ENCODE measurements at regions of chr7 and their contacts with region 1.

Region 1: GRCh38 chr7:44606450-44607254 is at the start of gene OGDH:
- DNase-seq: peak; percentile 100
- H3K4me3 Mint-ChIP-seq: peak within 1 kb of the TSS; percentile 98
- H3K27ac Mint-ChIP-seq: peak within 1 kb of the TSS; percentile 98
- H3K4me1 Mint-ChIP-seq: peaks cover 48% of the 10 kb centered on the region
- H3K27me3 Mint-ChIP-seq: peaks cover 6% of the 10 kb centered on the region
- total RNA-seq, gene OGDH: 164 to 166 TPM

Region 2: GRCh38 chr7:44490351-44491200 is 116.1 kb before region 1 on chr7 and contains the start of gene NUDCD3:
- CTCF ChIA-PET with region 1: no interaction called
- POLR2A ChIA-PET with region 1: interaction called, 19 read pairs
- DNase-seq: peak; percentile 86
- H3K4me3 Mint-ChIP-seq: peak within 1 kb of the TSS; percentile 81
- H3K27ac Mint-ChIP-seq: peak within 1 kb of the TSS; percentile 85
- H3K4me1 Mint-ChIP-seq: peaks cover 43% of the 10 kb centered on the region
- H3K27me3 Mint-ChIP-seq: peaks cover 5% of the 10 kb centered on the region
- total RNA-seq, gene NUDCD3: 91.0 to 97.5 TPM

Region 3: GRCh38 chr7:44505595-44505994 is 101.1 kb before region 1 on chr7:
- CTCF ChIA-PET with region 1: no interaction called
- POLR2A ChIA-PET with region 1: no interaction called
- DNase-seq: no peak
- H3K4me3 Mint-ChIP-seq: no peak overlapping the region
- H3K27ac Mint-ChIP-seq: no peak overlapping the region
- H3K4me1 Mint-ChIP-seq: peaks cover 2% of the 10 kb centered on the region
- H3K27me3 Mint-ChIP-seq: peaks cover 13% of the 10 kb centered on the region

Region 4: DNA sequence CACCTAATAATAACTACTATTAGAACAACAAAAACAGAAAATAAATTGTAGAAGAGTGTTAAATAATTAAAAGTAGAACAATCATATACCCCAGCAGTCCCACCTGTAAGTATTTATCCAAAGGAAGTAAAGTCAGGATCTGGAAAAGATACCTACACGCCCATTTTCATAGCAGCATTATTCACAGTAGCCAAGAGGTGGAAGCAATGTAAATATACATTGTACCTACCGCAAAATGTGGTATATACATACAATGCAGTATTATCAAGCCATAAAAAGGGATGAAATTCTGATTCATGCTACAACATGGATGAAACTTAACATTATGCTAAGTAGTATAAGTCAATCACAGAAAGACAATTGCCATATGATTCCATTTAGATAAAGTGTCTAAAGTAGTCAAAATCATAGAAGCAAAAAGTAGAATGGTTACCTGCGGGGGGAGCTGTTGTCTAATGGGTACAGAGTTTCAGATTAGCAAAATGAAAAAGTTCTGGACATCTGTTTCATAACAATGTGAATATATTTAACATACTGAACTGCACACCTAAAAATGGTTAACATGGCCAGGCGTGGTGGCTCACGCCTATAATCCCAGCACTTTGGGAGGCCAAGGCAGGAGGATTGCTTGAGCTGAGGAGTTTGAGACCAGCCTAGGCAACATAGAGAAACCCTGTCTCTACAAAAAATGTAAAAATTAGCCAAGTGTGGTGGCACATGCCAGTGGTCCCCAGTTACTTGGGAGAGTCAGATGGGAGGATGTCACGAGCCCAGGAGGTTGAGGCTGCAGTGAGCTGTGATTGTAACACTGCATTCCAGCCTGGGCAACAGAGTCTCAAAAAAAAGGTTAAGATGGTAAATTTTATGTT is 18.6 kb before region 1 on chr7:
- CTCF ChIA-PET with region 1: no interaction called
- POLR2A ChIA-PET with region 1: interaction called, 57 read pairs
- DNase-seq: peak; percentile 73
- H3K4me3 Mint-ChIP-seq: no peak overlapping the region
- H3K27ac Mint-ChIP-seq: peak overlapping the region; percentile 31
- H3K4me1 Mint-ChIP-seq: peaks cover 18% of the 10 kb centered on the region
- H3K27me3 Mint-ChIP-seq: peaks cover under 1% of the 10 kb centered on the region

Region 5: DNA sequence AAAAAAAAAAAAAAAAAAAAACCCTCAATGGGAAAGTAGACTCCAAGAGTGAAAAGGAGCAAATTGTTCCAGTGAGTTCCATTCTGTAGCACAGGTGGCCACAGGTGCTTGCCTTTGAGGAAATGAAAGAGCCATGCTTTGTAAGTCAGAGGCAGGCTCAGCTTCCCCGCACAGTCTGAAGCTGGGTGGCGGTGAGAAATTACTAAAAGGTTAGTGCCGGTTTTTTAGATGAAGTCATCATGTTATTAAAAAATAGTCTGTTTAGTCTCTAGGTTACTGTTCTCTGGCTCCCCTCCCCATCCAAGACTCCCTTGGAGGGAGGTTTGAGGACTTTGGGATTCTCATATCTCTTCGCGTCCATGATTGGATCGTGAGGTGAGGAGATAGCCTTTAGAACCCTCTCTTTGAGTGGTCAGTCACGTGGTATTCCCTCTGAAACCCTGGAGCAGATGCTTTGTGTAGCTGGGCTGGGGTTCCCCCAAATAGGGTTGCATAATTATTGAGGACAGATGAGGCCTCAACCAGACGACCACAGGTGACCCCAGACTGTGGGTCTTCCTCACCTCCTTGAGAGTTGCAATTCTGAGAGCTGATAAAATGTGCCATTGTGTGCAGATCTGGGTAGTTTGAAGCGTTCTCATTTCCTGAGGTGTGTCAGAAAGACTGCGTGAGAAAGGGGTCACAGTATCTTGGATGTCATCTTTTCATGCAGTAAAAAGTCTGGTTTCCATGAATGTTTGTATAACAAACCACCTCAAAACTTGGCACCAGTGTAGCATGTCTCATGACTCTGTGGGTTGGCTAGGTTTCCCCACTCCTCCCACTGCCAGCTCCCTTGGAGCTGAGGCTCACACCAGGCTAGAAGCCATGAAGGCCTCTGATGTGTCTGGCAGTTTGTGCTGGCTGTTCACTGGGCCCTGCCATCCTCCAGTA is 26.9 kb after region 1 on chr7:
- CTCF ChIA-PET with region 1: interaction called, 17 read pairs
- POLR2A ChIA-PET with region 1: interaction called, 1,257 read pairs
- DNase-seq: peak; percentile 67
- H3K4me3 Mint-ChIP-seq: no peak overlapping the region
- H3K27ac Mint-ChIP-seq: peak overlapping the region; percentile 100
- H3K4me1 Mint-ChIP-seq: peaks cover 99% of the 10 kb centered on the region
- H3K27me3 Mint-ChIP-seq: no peaks in the 10 kb centered on the region

Region 6: GRCh38 chr7:44748045-44748947 is 141.6 kb after region 1 on chr7 and contains the start of gene ZMIZ2:
- CTCF ChIA-PET with region 1: no interaction called
- POLR2A ChIA-PET with region 1: interaction called, 27 read pairs
- DNase-seq: peak; percentile 92
- H3K4me3 Mint-ChIP-seq: peak within 1 kb of the TSS; percentile 84
- H3K27ac Mint-ChIP-seq: peak within 1 kb of the TSS; percentile 66
- H3K4me1 Mint-ChIP-seq: peaks cover 43% of the 10 kb centered on the region
- H3K27me3 Mint-ChIP-seq: no peaks in the 10 kb centered on the region
- total RNA-seq, gene ZMIZ2: 85.2 to 91.4 TPM

Region 7: GRCh38 chr7:44885394-44886317 is 279.0 kb after region 1 on chr7 and contains the start of gene PURB:
- CTCF ChIA-PET with region 1: no interaction called
- POLR2A ChIA-PET with region 1: interaction called, 27 read pairs
- DNase-seq: peak; percentile 97
- H3K4me3 Mint-ChIP-seq: peak within 1 kb of the TSS; percentile 95
- H3K27ac Mint-ChIP-seq: peak within 1 kb of the TSS; percentile 99
- H3K4me1 Mint-ChIP-seq: peaks cover 64% of the 10 kb centered on the region
- H3K27me3 Mint-ChIP-seq: no peaks in the 10 kb centered on the region
- total RNA-seq, gene PURB: 27.7 to 29.3 TPM

Measured in activated CD4-positive, alpha-beta memory T cell treated with anti-CD3 and anti-CD28 coated beads, Interleukin-2, amount 10 ng/mL, durations not matched to agents 7 days and 5 days (primary cell).